ENCODE measurements at regions of chr5 and their contacts with region 1.

Region 1: DNA sequence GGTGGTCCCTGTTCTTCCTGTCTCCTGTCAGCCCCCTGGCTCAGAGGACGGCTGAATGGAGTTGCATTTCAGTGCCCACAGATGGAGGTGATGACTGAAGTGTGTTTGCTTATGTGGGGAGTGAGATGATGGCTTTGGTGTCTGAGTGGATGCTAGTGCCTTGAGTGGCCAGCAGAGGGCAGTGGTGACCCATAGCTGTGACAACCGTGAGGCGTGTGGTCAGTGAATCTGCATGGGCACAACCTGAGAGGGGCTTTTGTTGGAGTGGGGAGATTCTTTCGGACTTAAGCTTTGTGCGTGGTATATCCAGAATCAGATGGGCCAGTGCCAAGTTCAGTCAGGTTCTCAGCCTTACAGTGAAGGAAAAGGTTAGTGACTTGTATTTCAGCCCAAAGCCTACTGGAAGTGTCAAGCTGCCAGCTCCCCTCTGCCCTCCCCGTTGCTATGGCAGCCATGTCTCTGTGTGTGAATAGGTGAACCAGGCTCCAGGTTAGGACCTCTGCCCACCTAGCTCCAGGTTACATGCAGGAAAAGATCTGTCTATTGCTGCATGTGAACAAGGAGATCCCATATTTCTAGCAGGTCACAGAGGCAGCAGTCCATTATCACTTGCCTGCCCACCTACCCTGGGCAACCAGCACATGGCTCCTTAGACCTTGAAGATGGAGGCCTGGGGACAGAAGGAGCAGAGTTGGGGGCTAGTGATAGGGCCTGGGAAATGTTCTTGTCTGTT is 14.7 kb upstream of the CXXC5 start:
- DNase-seq: peak; percentile 73
- ATAC-seq: peak; percentile 31
- H3K4me3 Mint-ChIP-seq: no peak overlapping the region
- H3K27ac Mint-ChIP-seq: peak overlapping the region; percentile 43
- H3K4me1 Mint-ChIP-seq: peaks cover 46% of the 10 kb centered on the region
- H3K27me3 Mint-ChIP-seq: no peaks in the 10 kb centered on the region
- CTCF ChIP-seq: peak; percentile 91

Region 2: GRCh38 chr5:139574641-139575312 is 58.7 kb before region 1 on chr5:
- CTCF ChIA-PET with region 1: interaction called, 22 read pairs
- POLR2A ChIA-PET with region 1: interaction called, 6 read pairs
- intact Hi-C with region 1: no loop called
- DNase-seq: peak; percentile 25
- ATAC-seq: peak; percentile 46
- H3K4me3 Mint-ChIP-seq: no peak overlapping the region
- H3K27ac Mint-ChIP-seq: peak overlapping the region; percentile 25
- H3K4me1 Mint-ChIP-seq: peaks cover 70% of the 10 kb centered on the region
- H3K27me3 Mint-ChIP-seq: no peaks in the 10 kb centered on the region
- CTCF ChIP-seq: peak; percentile 78

Region 3: DNA sequence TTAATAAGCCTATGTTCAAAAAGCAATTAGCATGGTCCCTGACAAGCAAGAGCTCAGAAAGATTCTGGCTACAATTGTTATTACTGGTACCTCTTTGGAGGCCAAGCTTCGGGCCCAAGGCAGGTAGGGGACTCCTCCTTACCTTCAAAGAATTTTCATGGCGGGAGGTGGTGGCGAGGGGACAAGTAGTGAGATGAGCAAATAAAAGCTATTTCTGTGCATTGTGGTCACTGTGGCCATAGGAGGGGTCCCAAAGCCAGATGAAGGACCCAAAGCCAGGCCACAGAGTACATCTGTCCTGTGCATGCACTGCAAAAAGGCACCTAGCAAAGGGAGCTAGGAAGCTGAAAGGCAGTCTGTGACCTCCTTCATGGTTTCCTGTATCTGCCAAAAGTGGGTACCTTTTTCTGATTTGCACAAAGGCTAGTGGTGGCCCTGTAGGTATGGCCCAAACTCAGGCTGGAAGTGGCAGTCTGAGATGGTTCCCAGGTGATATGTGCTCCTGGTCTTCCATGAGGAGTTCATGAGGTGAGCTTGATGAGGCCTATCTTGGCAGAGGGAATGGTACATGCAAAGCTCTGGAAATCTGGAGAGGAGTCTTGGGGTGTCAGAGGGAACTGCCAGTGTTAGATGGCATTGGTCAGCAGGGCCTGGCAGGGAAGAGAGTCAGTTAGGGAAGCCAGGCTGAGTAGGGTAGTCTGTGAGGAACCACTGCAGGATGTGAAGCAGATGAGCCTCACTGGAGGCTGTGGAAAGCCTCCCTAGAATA is 11.4 kb after region 1 on chr5:
- CTCF ChIA-PET with region 1: interaction called, 40 read pairs
- POLR2A ChIA-PET with region 1: interaction called, 87 read pairs
- intact Hi-C with region 1: loop called (anchors 1 kb)
- DNase-seq: no peak
- ATAC-seq: no peak
- H3K4me3 Mint-ChIP-seq: no peak overlapping the region
- H3K27ac Mint-ChIP-seq: no peak overlapping the region
- H3K4me1 Mint-ChIP-seq: peaks cover 11% of the 10 kb centered on the region
- H3K27me3 Mint-ChIP-seq: peaks cover 23% of the 10 kb centered on the region
- CTCF ChIP-seq: no peak

Region 4: DNA sequence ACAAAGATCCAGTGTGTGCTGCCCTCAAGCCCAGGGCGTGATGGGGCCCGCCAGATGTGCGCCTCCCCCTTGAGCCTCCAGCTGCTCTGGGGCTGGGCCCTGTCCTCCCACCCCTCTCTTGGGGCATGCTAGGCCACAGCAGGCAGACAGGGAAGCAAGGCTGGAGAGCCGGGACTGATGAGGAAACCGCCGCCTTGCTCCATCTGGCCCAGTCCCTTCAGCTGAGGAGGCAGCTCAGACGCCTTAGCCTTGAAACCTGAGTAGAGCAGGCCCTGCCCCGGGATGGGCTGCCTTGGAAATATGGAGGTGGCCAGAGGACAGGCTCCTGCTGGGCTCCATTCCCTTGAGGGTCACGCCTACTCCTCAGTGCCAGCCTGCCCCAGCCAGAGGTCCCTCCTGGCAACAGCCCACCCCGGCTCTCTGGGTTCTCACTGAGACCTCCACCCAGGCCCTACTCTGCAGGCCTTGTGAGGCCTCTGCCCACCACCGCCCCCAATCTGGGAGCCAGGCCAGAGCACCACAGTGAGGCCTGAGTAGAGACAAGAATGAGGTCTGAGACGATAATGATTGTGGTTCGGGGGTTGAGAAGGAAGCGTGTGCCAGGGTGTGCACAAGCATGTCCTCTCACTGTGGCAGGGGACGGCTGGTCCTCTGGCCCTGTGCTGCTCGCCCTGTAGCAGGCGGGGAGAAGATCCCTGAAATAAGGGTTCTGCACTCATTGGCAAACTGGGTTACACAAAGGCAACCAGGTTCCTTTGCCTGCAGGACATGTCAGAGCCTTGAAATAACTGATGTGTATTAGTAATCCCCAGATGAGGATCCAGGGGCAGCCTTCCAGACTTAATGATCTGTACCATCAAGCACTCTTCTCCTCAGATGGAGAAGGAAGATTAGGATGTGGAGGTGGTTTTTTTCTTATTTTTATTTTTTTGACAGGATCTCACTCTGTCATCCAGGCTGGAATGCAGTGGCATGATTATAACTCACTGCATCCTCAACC is 45.6 kb after region 1 on chr5:
- CTCF ChIA-PET with region 1: interaction called, 25 read pairs
- POLR2A ChIA-PET with region 1: interaction called, 4 read pairs
- intact Hi-C with region 1: loop called (anchors 5 kb)
- DNase-seq: no peak
- ATAC-seq: no peak
- H3K4me3 Mint-ChIP-seq: no peak overlapping the region
- H3K27ac Mint-ChIP-seq: no peak overlapping the region
- H3K4me1 Mint-ChIP-seq: peaks cover 8% of the 10 kb centered on the region
- H3K27me3 Mint-ChIP-seq: no peaks in the 10 kb centered on the region
- CTCF ChIP-seq: no peak

Region 5: GRCh38 chr5:139698490-139699146 is 65.2 kb after region 1 on chr5:
- CTCF ChIA-PET with region 1: interaction called, 94 read pairs
- POLR2A ChIA-PET with region 1: interaction called, 3 read pairs
- intact Hi-C with region 1: no loop called
- DNase-seq: no peak
- ATAC-seq: no peak
- H3K4me3 Mint-ChIP-seq: no peak overlapping the region
- H3K27ac Mint-ChIP-seq: no peak overlapping the region
- H3K4me1 Mint-ChIP-seq: peaks cover 36% of the 10 kb centered on the region
- H3K27me3 Mint-ChIP-seq: peaks cover 7% of the 10 kb centered on the region
- CTCF ChIP-seq: no peak

Region 6: GRCh38 chr5:139765409-139766217 is 132.2 kb after region 1 on chr5:
- CTCF ChIA-PET with region 1: interaction called, 211 read pairs
- POLR2A ChIA-PET with region 1: interaction called, 9 read pairs
- intact Hi-C with region 1: loop called (anchors 5 kb)
- DNase-seq: peak; percentile 83
- ATAC-seq: peak; percentile 94
- H3K4me3 Mint-ChIP-seq: peak overlapping the region; percentile 56
- H3K27ac Mint-ChIP-seq: peak overlapping the region; percentile 59
- H3K4me1 Mint-ChIP-seq: peaks cover 12% of the 10 kb centered on the region
- H3K27me3 Mint-ChIP-seq: peaks cover 21% of the 10 kb centered on the region
- CTCF ChIP-seq: peak; percentile 100

Region 7: DNA sequence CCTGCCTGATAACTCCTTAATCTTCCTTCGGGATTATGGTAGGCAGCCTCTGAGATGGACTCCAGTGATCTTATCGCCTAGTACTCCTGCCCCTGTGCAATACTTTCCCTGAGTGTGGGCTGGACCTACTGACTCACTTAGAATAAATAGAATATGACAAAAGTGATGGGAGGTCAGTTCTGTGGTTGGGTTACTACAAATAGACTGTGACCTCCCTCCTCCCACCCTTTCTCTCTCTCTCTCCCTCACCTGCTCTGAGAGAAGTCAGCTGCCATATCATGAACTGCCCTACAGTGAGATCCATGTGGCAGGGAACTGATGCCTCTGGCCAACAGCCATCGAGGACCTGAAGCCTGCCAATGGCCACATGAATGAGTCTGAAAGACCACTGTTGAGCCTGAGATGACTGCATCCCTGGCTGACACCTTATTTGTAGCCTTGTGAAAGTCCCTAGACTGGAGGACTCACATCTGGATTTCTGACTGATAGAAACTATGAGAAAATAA is 377.9 kb after region 1 on chr5:
- CTCF ChIA-PET with region 1: no interaction called
- POLR2A ChIA-PET with region 1: no interaction called
- intact Hi-C with region 1: no loop called
- DNase-seq: no peak
- ATAC-seq: no peak
- H3K4me3 Mint-ChIP-seq: no peak overlapping the region
- H3K27ac Mint-ChIP-seq: no peak overlapping the region
- H3K4me1 Mint-ChIP-seq: no peaks in the 10 kb centered on the region
- H3K27me3 Mint-ChIP-seq: peaks cover 4% of the 10 kb centered on the region
- CTCF ChIP-seq: no peak